ENCODE measurements at regions of chr3 and their contacts with region 1.

Region 1: DNA sequence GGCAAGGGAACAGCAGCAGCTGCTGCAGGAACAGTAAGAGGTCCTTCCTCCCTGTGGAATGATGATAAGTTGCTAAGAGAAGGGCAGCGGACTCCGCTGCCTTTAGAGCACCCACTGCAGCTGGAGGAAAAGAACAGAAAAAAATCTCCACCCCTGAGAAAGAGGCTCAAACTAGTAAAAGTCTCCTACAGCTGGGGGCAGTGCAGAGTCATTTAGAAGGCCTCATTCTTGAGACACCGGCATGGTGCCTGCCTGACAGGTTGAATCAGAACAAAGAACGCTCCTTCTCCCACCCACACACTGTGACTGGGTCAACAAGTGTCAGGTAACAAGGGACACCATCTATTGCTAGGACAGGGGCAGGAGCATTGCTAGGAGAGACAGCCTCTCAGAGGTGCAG is 188.4 kb downstream of the ABHD5 start:
- DNase-seq: no peak
- H3K4me3 ChIP-seq: no peak overlapping the region
- H3K27ac ChIP-seq: no peak overlapping the region
- H3K4me1 ChIP-seq: no peaks in the 10 kb centered on the region
- H3K27me3 ChIP-seq: no peaks in the 10 kb centered on the region
- CTCF ChIP-seq: no peak

Region 2: DNA sequence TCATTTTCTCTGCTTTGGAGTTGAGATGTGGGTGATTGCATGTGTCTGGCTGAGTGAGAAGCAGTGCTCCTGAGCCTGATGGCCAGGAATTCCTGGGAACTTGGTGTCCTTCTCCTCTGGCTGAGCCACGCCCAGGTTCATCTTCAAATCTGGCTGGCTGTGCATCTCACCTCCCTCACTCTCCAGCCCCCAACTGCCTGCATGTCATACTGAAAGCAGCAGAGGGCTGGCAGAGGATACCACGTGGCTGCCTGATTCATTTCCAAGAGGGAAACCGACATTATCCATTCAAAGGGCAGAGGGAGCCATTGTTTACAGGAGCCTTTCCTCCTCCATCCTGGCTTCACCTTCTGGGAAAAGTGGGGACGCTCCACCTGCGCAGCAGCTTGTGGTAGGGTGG is 131.0 kb before region 1 on chr3:
- intact Hi-C with region 1: no loop called
- DNase-seq: no peak
- H3K4me3 ChIP-seq: no peak overlapping the region
- H3K27ac ChIP-seq: no peak overlapping the region
- H3K4me1 ChIP-seq: no peaks in the 10 kb centered on the region
- H3K27me3 ChIP-seq: no peaks in the 10 kb centered on the region
- CTCF ChIP-seq: no peak

Region 3: GRCh38 chr3:44114142-44114541 is 235.0 kb after region 1 on chr3:
- intact Hi-C with region 1: loop called (anchors 10 kb)
- DNase-seq: peak; percentile 41
- H3K4me3 ChIP-seq: no peak overlapping the region
- H3K27ac ChIP-seq: no peak overlapping the region
- H3K4me1 ChIP-seq: no peaks in the 10 kb centered on the region
- H3K27me3 ChIP-seq: no peaks in the 10 kb centered on the region
- CTCF ChIP-seq: no peak